MCF 10A (cell line): ENCODE measurements at regions of chr1 and their contacts with region 1.

Region 1: GRCh38 chr1:230797942-230798418 is 50.8 kb downstream of the CAPN9 start:
- DNase-seq: peak; percentile 83
- H3K4me3 Mint-ChIP-seq: no peak overlapping the region
- H3K27ac Mint-ChIP-seq: no peak overlapping the region
- H3K4me1 Mint-ChIP-seq: no peaks in the 10 kb centered on the region
- H3K27me3 Mint-ChIP-seq: peaks cover 34% of the 10 kb centered on the region
- CTCF ChIP-seq: peak; percentile 70

Region 2: GRCh38 chr1:230825063-230825721 is 27.2 kb after region 1 on chr1:
- CTCF ChIA-PET with region 1: interaction called, 11 read pairs
- POLR2A ChIA-PET with region 1: interaction called, 4 read pairs
- intact Hi-C with region 1: no loop called
- DNase-seq: peak; percentile 97
- H3K4me3 Mint-ChIP-seq: peak overlapping the region; percentile 7
- H3K27ac Mint-ChIP-seq: peak overlapping the region; percentile 17
- H3K4me1 Mint-ChIP-seq: peaks cover 24% of the 10 kb centered on the region
- H3K27me3 Mint-ChIP-seq: peaks cover 20% of the 10 kb centered on the region
- CTCF ChIP-seq: no peak

Region 3: DNA sequence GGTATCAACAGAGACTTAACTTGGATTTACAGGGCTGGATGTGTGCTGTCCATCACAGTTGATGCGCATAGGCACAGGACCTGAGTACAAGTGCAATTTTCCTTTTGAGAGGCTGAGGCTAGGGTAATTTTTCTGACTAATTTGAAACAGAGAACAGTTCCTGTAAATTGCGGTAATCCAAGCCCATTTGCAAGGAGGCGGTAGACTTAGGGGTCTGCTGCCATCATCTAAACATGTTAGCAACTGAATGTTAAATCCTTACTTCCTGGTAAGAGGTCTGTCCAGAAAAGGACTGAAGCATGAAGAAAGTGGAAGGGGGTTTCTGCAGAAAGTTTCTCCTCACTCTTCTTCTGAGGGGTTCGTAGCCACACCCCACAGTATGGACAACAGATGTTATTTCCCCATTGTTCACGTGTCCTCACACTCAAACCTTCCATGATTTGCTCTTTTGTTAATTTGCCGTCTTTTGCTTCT is 94.1 kb after region 1 on chr1:
- CTCF ChIA-PET with region 1: interaction called, 16 read pairs
- POLR2A ChIA-PET with region 1: no interaction called
- intact Hi-C with region 1: no loop called
- DNase-seq: no peak
- H3K4me3 Mint-ChIP-seq: no peak overlapping the region
- H3K27ac Mint-ChIP-seq: no peak overlapping the region
- H3K4me1 Mint-ChIP-seq: no peaks in the 10 kb centered on the region
- H3K27me3 Mint-ChIP-seq: peaks cover 16% of the 10 kb centered on the region
- CTCF ChIP-seq: no peak

Region 4: GRCh38 chr1:230922620-230923019 is 124.6 kb after region 1 on chr1:
- CTCF ChIA-PET with region 1: interaction called, 70 read pairs
- POLR2A ChIA-PET with region 1: no interaction called
- intact Hi-C with region 1: loop called (anchors 1 kb)
- DNase-seq: no peak
- H3K4me3 Mint-ChIP-seq: no peak overlapping the region
- H3K27ac Mint-ChIP-seq: no peak overlapping the region
- H3K4me1 Mint-ChIP-seq: no peaks in the 10 kb centered on the region
- H3K27me3 Mint-ChIP-seq: no peaks in the 10 kb centered on the region
- CTCF ChIP-seq: no peak

Region 5: GRCh38 chr1:231091831-231092301 is 293.9 kb after region 1 on chr1:
- CTCF ChIA-PET with region 1: no interaction called
- POLR2A ChIA-PET with region 1: no interaction called
- intact Hi-C with region 1: loop called (anchors 2 kb)
- DNase-seq: peak; percentile 79
- H3K4me3 Mint-ChIP-seq: no peak overlapping the region
- H3K27ac Mint-ChIP-seq: no peak overlapping the region
- H3K4me1 Mint-ChIP-seq: peaks cover 4% of the 10 kb centered on the region
- H3K27me3 Mint-ChIP-seq: peaks cover 76% of the 10 kb centered on the region
- CTCF ChIP-seq: peak; percentile 87